H1 (cell line): ENCODE measurements at regions of chr20 and their contacts with region 1.

Region 1: DNA sequence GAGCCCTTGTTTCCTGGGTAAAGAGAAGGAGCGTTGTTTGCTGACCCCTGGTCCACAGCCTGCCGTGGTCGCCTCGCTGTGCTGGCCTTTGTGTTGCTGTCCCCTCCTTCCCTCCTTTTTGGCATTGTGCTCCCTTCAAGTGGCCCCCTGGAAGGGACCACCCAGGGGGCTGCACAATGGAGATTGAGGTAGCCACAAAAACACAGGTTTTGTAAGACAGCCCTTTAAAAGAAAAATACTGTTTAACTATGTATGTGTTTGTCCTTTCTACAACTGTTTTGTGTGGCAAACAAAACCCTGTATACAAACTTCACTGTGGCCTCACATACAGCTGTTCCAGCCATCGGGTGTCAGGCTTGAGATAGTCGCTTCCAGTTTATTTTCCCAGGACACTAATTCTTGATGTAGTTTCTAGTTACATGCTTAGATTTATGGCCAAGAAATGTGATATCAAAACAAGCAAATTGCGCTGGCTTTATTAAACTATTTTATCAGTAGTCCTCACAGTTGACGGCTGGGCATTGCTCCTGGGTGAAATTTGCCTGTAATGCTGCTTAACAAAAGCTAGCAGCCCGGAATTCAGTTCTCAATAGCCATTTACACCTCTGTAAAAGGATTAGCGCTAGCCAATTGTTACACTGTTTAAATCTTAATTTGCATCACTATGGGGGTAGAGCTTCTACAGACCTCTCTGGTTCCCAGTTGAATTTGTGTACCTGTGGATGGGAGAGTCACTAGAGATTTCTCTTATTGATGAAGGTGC is 64.1 kb downstream of the KIZ start:
- DNase-seq: peak; percentile 75 to 82
- H3K4me3 ChIP-seq: peak overlapping the region in 3 of 4 experiments; percentile 23 to 51 (median 27); a peak in 4 of 8 replicates
- H3K27ac ChIP-seq: peak overlapping the region; percentile 87
- H3K4me1 ChIP-seq: peaks cover 8 to 23% (median 20%) of the 10 kb centered on the region in 4 experiments; a peak in 6 of 7 replicates
- H3K27me3 ChIP-seq: no peaks in the 10 kb centered on the region
- CTCF ChIP-seq: no peak
- EP300 ChIP-seq: peak in 1 of 2 experiments; percentile 90; a peak in 2 of 3 replicates
- POLR2A ChIP-seq: peak; percentile 20 to 47; a peak in 2 of 3 replicates
- RAD21 ChIP-seq: 0 out of 4 replicates have a peak, but pooled peaks of 1 of the 2 experiments have one; percentile 3

Region 2: GRCh38 chr20:21099751-21100577 is 90.0 kb before region 1 on chr20:
- CTCF ChIA-PET with region 1: no interaction called
- POLR2A ChIA-PET with region 1: interaction called, 20 read pairs
- DNase-seq: peak in 1 of 2 experiments; percentile 68
- H3K4me3 ChIP-seq: peak overlapping the region; percentile 44 to 78 (median 64)
- H3K27ac ChIP-seq: no peak overlapping the region
- H3K4me1 ChIP-seq: peaks cover 10 to 23% (median 17%) of the 10 kb centered on the region in 4 experiments
- H3K27me3 ChIP-seq: peaks cover 26 to 84% (median 74%) of the 10 kb centered on the region in 4 experiments
- CTCF ChIP-seq: no peak
- EP300 ChIP-seq: no peak
- POLR2A ChIP-seq: no peak
- RAD21 ChIP-seq: no peak

Region 3: GRCh38 chr20:21125849-21126580 is 63.9 kb before region 1 on chr20 and contains the start of gene KIZ:
- CTCF ChIA-PET with region 1: no interaction called
- POLR2A ChIA-PET with region 1: interaction called, 10 read pairs
- DNase-seq: peak; percentile 90 to 100
- H3K4me3 ChIP-seq: peak within 1 kb of the TSS; percentile 60 to 98 (median 78)
- H3K27ac ChIP-seq: 0 out of 2 replicates have a peak within 1 kb of the TSS, but pooled peaks have one; percentile 37
- H3K4me1 ChIP-seq: peaks cover 2 to 8% (median 7%) of the 10 kb centered on the region in 4 experiments; a peak in 5 of 7 replicates
- H3K27me3 ChIP-seq: no peaks in the 10 kb centered on the region
- CTCF ChIP-seq: peak; percentile 25 to 51 (median 46)
- EP300 ChIP-seq: no peak
- POLR2A ChIP-seq: peak in 1 of 2 experiments; percentile 79; a peak in 2 of 3 replicates
- RAD21 ChIP-seq: peak in 1 of 2 experiments; percentile 52; a peak in 2 of 4 replicates
- total RNA-seq, gene KIZ: 47.9 and 51.7 TPM in 2 replicates

Region 4: GRCh38 chr20:21173485-21173884 is 16.5 kb before region 1 on chr20:
- CTCF ChIA-PET with region 1: no interaction called
- POLR2A ChIA-PET with region 1: interaction called, 22 read pairs
- DNase-seq: no peak
- H3K4me3 ChIP-seq: no peak overlapping the region
- H3K27ac ChIP-seq: no peak overlapping the region
- H3K4me1 ChIP-seq: peaks cover 0 to 7% (median 3%) of the 10 kb centered on the region in 4 experiments; a peak in 2 of 7 replicates
- H3K27me3 ChIP-seq: no peaks in the 10 kb centered on the region
- CTCF ChIP-seq: no peak
- EP300 ChIP-seq: no peak
- POLR2A ChIP-seq: no peak
- RAD21 ChIP-seq: no peak

Region 5: DNA sequence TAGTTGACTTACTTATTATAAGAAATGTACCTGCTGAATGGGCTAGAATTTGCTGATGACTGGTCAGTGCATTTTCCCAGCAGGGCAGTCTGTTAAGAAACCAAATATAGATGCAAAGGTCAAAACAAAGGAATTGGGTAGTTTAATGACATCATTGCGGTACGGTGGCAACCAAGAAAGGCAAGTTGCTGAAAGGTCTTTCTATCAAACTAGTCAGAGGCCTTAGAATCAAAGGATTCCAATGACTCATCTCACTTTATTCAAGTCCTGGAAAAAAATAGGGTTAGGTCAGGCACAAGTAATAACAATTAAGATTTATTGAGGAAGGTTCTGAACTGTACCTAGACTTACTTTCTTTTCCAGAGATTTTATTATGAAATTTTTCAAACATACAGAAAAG is 12.3 kb after region 1 on chr20:
- CTCF ChIA-PET with region 1: no interaction called
- POLR2A ChIA-PET with region 1: interaction called, 31 read pairs
- DNase-seq: no peak
- H3K4me3 ChIP-seq: no peak overlapping the region
- H3K27ac ChIP-seq: no peak overlapping the region
- H3K4me1 ChIP-seq: peaks cover 0 to 4% (median 2%) of the 10 kb centered on the region in 4 experiments; a peak in 2 of 7 replicates
- H3K27me3 ChIP-seq: no peaks in the 10 kb centered on the region
- CTCF ChIP-seq: no peak
- EP300 ChIP-seq: no peak
- POLR2A ChIP-seq: no peak
- RAD21 ChIP-seq: no peak

Region 6: DNA sequence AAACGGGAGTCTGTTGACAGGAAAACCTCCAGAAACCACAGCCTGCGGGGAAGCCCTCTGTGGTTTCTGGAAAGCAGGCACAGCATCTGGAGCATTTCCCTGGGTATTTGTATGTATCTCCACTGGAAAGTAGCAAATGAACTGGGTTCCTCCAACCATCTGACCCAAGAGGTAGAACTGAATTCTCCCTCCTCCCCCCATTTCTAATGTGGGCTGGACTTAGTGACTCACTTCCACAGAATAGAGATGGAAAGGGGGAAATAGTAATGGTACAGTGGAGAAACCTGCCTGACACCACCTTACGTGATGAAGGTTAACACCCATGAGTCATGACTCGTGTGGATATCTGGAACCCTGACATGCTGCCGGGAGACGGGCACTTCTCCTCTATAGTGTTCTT is 61.3 kb after region 1 on chr20:
- CTCF ChIA-PET with region 1: no interaction called
- POLR2A ChIA-PET with region 1: no interaction called
- DNase-seq: no peak
- H3K4me3 ChIP-seq: no peak overlapping the region
- H3K27ac ChIP-seq: no peak overlapping the region
- H3K4me1 ChIP-seq: no peaks in the 10 kb centered on the region
- H3K27me3 ChIP-seq: no peaks in the 10 kb centered on the region
- CTCF ChIP-seq: no peak
- EP300 ChIP-seq: no peak
- POLR2A ChIP-seq: no peak
- RAD21 ChIP-seq: no peak